ENCODE measurements at regions of chr12 and their contacts with region 1.

Region 1: DNA sequence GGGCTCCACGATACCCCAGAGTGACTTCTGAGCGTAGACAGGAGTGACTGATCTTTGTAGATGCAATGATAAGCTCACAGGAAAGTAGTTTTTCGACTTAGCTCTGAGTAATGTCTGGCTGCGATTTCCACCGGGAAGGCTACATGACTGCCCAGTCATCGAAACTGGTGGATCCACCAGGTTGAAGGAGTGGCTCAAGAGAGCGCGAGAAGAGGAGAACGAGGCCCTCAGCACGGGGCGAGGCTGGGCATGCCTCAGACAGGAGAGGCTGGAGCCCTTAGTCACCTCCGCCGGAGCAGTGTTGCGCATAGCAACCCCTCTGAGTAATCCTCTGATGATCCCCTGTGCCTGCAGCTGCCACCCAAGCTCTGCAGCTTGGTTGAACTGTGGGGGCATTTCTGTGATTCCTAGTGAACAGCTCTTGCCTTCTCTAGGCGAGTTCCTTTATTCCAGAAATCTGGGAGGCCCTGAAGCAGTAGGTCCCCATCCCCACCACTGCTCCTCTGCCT is 25.6 kb downstream of the ELK3 start:
- DNase-seq: no peak
- H3K4me3 ChIP-seq: no peak overlapping the region
- H3K4me3 Mint-ChIP-seq: peak overlapping the region in 2 of 8 donors; percentile 16 to 51
- H3K27ac ChIP-seq: no peak overlapping the region
- H3K27ac Mint-ChIP-seq: peak overlapping the region; percentile 50 to 78 (median 68)
- H3K4me1 ChIP-seq: peaks cover 37% of the 10 kb centered on the region
- H3K4me1 Mint-ChIP-seq: peaks cover 37 to 73% (median 51%) of the 10 kb centered on the region in 4 donors
- H3K27me3 ChIP-seq: no peaks in the 10 kb centered on the region
- H3K27me3 Mint-ChIP-seq: no peaks in the 10 kb centered on the region

Region 2: DNA sequence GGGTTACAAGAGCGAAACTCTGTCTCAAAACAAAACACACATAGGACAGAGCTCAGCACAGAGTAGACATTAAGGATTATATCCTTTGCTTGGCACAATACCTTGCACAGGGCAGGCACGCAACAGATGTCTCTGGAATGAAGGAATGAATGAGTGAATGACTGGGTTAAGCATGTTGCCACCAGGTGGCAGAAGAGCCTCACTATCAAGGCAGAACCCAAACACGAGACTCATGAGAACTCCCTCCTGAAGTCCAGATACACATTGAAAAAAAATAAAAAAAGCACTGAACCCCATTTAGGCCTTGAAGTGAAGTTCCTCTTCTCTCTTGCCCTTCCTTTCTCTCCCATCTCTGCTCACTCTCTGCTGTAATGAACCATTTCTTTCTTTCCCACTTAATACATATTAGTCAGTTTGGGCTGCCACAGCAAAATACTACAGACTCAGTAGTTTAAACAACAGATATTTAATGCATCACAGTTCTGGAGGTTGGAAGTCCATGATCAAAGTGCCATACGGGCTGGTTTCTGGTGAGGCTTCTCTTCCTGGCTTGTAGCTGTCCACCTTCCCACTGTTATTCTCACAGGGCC is 157.8 kb before region 1 on chr12:
- CTCF ChIA-PET with region 1: interaction called, 206 read pairs
- POLR2A ChIA-PET with region 1: interaction called, 6 read pairs
- intact Hi-C with region 1: loop called (anchors 1 kb)
- DNase-seq: peak; percentile 75 to 80 (median 78)
- H3K4me3 ChIP-seq: no peak overlapping the region
- H3K4me3 Mint-ChIP-seq: peak overlapping the region in 1 of 8 donors; percentile 9
- H3K27ac ChIP-seq: no peak overlapping the region
- H3K27ac Mint-ChIP-seq: peak overlapping the region in 5 of 7 donors; percentile 1 to 73 (median 36)
- H3K4me1 ChIP-seq: peaks cover 26% of the 10 kb centered on the region
- H3K4me1 Mint-ChIP-seq: peaks cover 19 to 36% (median 27%) of the 10 kb centered on the region in 4 donors
- H3K27me3 ChIP-seq: no peaks in the 10 kb centered on the region
- H3K27me3 Mint-ChIP-seq: no peaks in the 10 kb centered on the region

Region 3: GRCh38 chr12:96099986-96100385 is 119.8 kb before region 1 on chr12:
- CTCF ChIA-PET with region 1: interaction called, 20 read pairs
- POLR2A ChIA-PET with region 1: interaction called, 3 read pairs
- intact Hi-C with region 1: no loop called
- DNase-seq: peak in 4 of 5 donors; percentile 7 to 36 (median 20)
- H3K4me3 ChIP-seq: no peak overlapping the region
- H3K4me3 Mint-ChIP-seq: peak overlapping the region; percentile 25 to 80 (median 65)
- H3K27ac ChIP-seq: no peak overlapping the region
- H3K27ac Mint-ChIP-seq: peak overlapping the region in 6 of 7 donors; percentile 2 to 84 (median 48)
- H3K4me1 ChIP-seq: peaks cover 28% of the 10 kb centered on the region
- H3K4me1 Mint-ChIP-seq: peaks cover 6 to 31% (median 18%) of the 10 kb centered on the region in 4 donors
- H3K27me3 ChIP-seq: no peaks in the 10 kb centered on the region
- H3K27me3 Mint-ChIP-seq: no peaks in the 10 kb centered on the region

Region 4: GRCh38 chr12:96177013-96177412 is 42.7 kb before region 1 on chr12:
- CTCF ChIA-PET with region 1: interaction called, 21 read pairs
- POLR2A ChIA-PET with region 1: no interaction called
- intact Hi-C with region 1: no loop called
- DNase-seq: peak in 2 of 5 donors; percentile 27 to 70
- H3K4me3 ChIP-seq: peak overlapping the region in 1 of 2 donors; percentile 19
- H3K4me3 Mint-ChIP-seq: peak overlapping the region in 6 of 8 donors; percentile 39 to 69 (median 56)
- H3K27ac ChIP-seq: peak overlapping the region; percentile 5
- H3K27ac Mint-ChIP-seq: peak overlapping the region; percentile 44 to 96 (median 73)
- H3K4me1 ChIP-seq: peaks cover 15% of the 10 kb centered on the region
- H3K4me1 Mint-ChIP-seq: peaks cover 7 to 14% (median 12%) of the 10 kb centered on the region in 4 donors
- H3K27me3 ChIP-seq: no peaks in the 10 kb centered on the region
- H3K27me3 Mint-ChIP-seq: peaks cover 0 to 8% of the 10 kb centered on the region in 2 donors

Region 5: GRCh38 chr12:96237465-96238077 is 17.8 kb after region 1 on chr12:
- CTCF ChIA-PET with region 1: interaction called, 11 read pairs
- POLR2A ChIA-PET with region 1: interaction called, 4 read pairs
- intact Hi-C with region 1: no loop called
- DNase-seq: peak; percentile 57 to 86 (median 62)
- H3K4me3 ChIP-seq: peak overlapping the region in 1 of 2 donors; percentile 11
- H3K4me3 Mint-ChIP-seq: peak overlapping the region in 7 of 8 donors; percentile 63 to 83 (median 80)
- H3K27ac ChIP-seq: peak overlapping the region; percentile 57
- H3K27ac Mint-ChIP-seq: peak overlapping the region; percentile 94 to 100 (median 98)
- H3K4me1 ChIP-seq: peaks cover 82% of the 10 kb centered on the region
- H3K4me1 Mint-ChIP-seq: peaks cover 59 to 97% (median 81%) of the 10 kb centered on the region in 4 donors
- H3K27me3 ChIP-seq: no peaks in the 10 kb centered on the region
- H3K27me3 Mint-ChIP-seq: no peaks in the 10 kb centered on the region

Region 6: GRCh38 chr12:96489103-96490056 is 269.6 kb after region 1 on chr12 and contains the start of gene CFAP54:
- CTCF ChIA-PET with region 1: interaction called, 10 read pairs
- POLR2A ChIA-PET with region 1: no interaction called
- intact Hi-C with region 1: loop called (anchors 1 kb)
- DNase-seq: peak; percentile 94 to 96 (median 95)
- H3K4me3 ChIP-seq: peak within 1 kb of the TSS; percentile 64 to 84
- H3K4me3 Mint-ChIP-seq: peak within 1 kb of the TSS; percentile 84 to 93 (median 92)
- H3K27ac ChIP-seq: peak within 1 kb of the TSS; percentile 62
- H3K27ac Mint-ChIP-seq: peak within 1 kb of the TSS; percentile 86 to 98 (median 97)
- H3K4me1 ChIP-seq: peaks cover 22% of the 10 kb centered on the region
- H3K4me1 Mint-ChIP-seq: peaks cover 19 to 31% (median 23%) of the 10 kb centered on the region in 4 donors
- H3K27me3 ChIP-seq: no peaks in the 10 kb centered on the region
- H3K27me3 Mint-ChIP-seq: no peaks in the 10 kb centered on the region
- total RNA-seq, gene CFAP54: 0.73 to 1.1 TPM

Region 7: GRCh38 chr12:96710127-96710745 is 490.5 kb after region 1 on chr12:
- CTCF ChIA-PET with region 1: no interaction called
- POLR2A ChIA-PET with region 1: no interaction called
- intact Hi-C with region 1: no loop called
- DNase-seq: no peak
- H3K4me3 ChIP-seq: no peak overlapping the region
- H3K4me3 Mint-ChIP-seq: no peak overlapping the region
- H3K27ac ChIP-seq: no peak overlapping the region
- H3K27ac Mint-ChIP-seq: no peak overlapping the region
- H3K4me1 ChIP-seq: no peaks in the 10 kb centered on the region
- H3K4me1 Mint-ChIP-seq: no peaks in the 10 kb centered on the region
- H3K27me3 ChIP-seq: no peaks in the 10 kb centered on the region
- H3K27me3 Mint-ChIP-seq: peaks cover 0 to 2% of the 10 kb centered on the region in 2 donors

Measured in CD4-positive, alpha-beta memory T cell (primary cell).